ENCODE measurements at regions of chr7 and their contacts with region 1.

Region 1: DNA sequence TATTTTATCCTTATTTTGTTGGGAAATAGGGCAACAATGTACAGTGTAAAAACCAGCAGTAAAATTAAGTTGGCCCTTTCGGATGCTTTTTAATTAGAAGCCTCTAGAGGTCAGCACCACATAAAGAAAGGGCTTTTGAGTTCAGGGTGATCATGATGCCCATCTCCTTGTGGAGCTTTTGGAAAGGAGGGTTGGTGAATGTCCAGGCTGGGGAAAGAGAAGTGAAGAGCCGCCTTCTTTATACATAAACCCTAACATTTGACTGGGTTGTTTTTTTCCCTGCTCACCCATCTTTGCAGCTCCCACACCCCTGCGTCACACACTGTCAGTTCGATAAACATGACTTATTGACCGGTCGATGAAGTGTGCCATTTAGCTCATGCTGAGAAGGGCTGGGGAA is 29.8 kb downstream of the MTURN start:
- DNase-seq: no peak
- H3K4me3 ChIP-seq: no peak overlapping the region
- H3K27ac ChIP-seq: peak overlapping the region in 1 of 2 donors; percentile 26
- H3K4me1 ChIP-seq: peaks cover 0 to 36% (median 20%) of the 10 kb centered on the region in 4 donors
- H3K27me3 ChIP-seq: no peaks in the 10 kb centered on the region
- CTCF ChIP-seq: peak; percentile 46 to 49

Region 2: DNA sequence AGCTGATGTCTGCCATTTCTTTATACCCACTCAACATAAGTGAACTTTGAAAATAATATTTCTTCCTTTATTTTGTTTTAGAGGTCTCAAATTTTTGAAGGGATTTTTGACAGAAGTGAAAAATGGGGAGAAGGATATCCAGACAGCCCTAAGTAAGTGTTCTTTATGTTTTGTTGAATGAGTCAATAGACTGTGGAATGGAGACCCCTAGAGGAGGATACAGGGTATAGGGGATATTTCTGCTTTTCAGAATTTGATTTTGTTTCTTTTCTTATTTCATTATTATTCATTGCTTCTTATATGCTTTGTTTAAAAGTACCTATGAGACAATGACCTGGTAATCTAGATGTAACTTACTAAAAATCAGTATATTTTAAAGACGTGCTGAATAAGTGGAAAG is 102.0 kb before region 1 on chr7:
- intact Hi-C with region 1: no loop called
- DNase-seq: no peak
- H3K4me3 ChIP-seq: no peak overlapping the region
- H3K27ac ChIP-seq: no peak overlapping the region
- H3K4me1 ChIP-seq: peaks cover 0 to 9% (median 0%) of the 10 kb centered on the region in 4 donors
- H3K27me3 ChIP-seq: no peaks in the 10 kb centered on the region
- CTCF ChIP-seq: peak; percentile 49 to 63

Region 3: DNA sequence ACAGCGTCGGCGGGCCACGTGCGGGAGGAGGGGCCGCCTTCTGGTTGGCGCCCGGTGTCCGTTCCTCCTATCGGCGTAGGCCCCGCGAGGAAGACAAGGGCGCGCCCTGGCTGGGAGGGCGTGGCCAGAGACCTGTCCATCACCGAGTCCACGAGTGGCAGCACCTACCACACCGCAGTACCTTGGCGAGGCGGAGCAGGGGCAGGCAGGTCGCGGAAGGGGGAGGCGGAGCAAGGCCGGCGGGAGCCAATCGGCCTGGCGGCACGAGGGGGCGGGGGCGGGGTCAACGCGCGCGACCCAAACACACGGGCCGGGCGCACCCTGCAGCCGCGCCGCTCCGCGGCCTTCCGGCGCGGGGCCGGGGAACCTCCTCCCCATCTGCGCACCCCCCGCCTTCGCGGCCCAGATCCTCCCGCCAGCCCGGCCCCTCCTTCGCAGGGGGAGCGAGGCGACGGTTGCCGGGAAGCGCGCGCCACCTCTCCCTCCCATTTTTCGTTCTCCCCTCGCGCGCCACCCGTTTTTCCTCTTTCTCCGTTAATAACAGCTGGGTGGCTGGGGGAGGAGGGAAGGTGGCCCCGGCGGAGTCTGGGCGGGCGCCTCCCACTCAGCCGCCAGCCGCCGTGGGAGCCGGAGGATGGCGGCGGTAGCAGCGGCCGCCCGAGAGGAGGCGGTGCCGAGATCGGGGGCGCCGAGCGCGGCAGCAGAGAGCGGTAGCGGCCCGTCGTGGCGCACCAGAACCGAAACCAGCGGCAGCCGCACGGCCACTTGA is 119.9 kb after region 1 on chr7 and contains the start of gene ZNRF2:
- intact Hi-C with region 1: loop called (anchors 10 kb)
- DNase-seq: peak; percentile 99 to 100
- H3K4me3 ChIP-seq: peak within 1 kb of the TSS; percentile 92 to 96
- H3K27ac ChIP-seq: peak within 1 kb of the TSS; percentile 98
- H3K4me1 ChIP-seq: peaks cover 0 to 31% (median 16%) of the 10 kb centered on the region in 4 donors
- H3K27me3 ChIP-seq: peaks cover 0 to 3% of the 10 kb centered on the region in 2 donors
- CTCF ChIP-seq: peak; percentile 41 to 51

Region 4: DNA sequence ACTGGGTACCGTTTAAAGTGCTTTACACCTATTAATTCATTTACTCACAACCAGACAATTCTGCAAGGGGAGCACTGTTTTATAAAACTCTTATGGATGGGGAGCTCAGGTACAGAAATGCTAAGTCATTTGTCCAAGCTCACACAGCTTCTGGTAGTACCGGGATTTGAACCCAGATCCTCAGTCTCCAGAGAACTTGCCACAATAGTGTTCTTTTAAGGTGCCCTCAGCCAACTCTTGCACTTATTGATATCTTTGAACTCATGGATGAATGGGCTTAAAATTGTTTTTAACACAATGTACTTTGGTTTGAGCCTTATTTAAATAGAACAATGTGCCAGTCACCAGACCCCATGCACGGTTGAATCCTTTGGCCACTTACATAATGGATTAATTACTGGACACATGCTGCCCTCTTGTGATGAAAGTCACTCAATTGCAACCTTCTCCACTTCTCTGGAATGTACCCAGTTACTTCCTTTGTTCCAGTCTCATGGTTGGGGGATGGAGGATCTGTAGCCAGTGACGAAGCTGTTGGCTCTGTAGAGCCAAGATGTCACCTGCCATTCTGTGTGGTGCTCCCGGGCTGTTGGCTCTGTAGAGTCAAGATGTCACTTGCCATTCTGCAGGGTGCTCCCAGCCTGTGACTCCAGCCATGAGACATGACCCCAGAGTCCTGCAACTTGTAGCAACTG is 248.4 kb after region 1 on chr7:
- intact Hi-C with region 1: loop called (anchors 5 kb)
- DNase-seq: peak in 1 of 2 donors; percentile 35
- H3K4me3 ChIP-seq: no peak overlapping the region
- H3K27ac ChIP-seq: no peak overlapping the region
- H3K4me1 ChIP-seq: no peaks in the 10 kb centered on the region
- H3K27me3 ChIP-seq: no peaks in the 10 kb centered on the region
- CTCF ChIP-seq: peak; percentile 57 to 64

Region 5: GRCh38 chr7:30504347-30505173 is 340.0 kb after region 1 on chr7 and contains the start of gene GGCT:
- intact Hi-C with region 1: loop called (anchors 10 kb)
- DNase-seq: peak; percentile 100
- H3K4me3 ChIP-seq: peak within 1 kb of the TSS; percentile 68 to 82
- H3K27ac ChIP-seq: peak within 1 kb of the TSS; percentile 94 to 98
- H3K4me1 ChIP-seq: peaks cover 0 to 25% (median 13%) of the 10 kb centered on the region in 4 donors
- H3K27me3 ChIP-seq: no peaks in the 10 kb centered on the region
- CTCF ChIP-seq: no peak

Region 6: GRCh38 chr7:30564243-30564892 is 399.8 kb after region 1 on chr7:
- intact Hi-C with region 1: loop called (anchors 10 kb)
- DNase-seq: peak; percentile 76 to 85
- H3K4me3 ChIP-seq: no peak overlapping the region
- H3K27ac ChIP-seq: no peak overlapping the region
- H3K4me1 ChIP-seq: peaks cover 0 to 6% (median 1%) of the 10 kb centered on the region in 4 donors
- H3K27me3 ChIP-seq: no peaks in the 10 kb centered on the region
- CTCF ChIP-seq: peak; percentile 73 to 82

Measured in tibial artery (tissue), 4 donors.